HCT116 (cell line): ENCODE measurements at regions of chr15 and their contacts with region 1.

Region 1: DNA sequence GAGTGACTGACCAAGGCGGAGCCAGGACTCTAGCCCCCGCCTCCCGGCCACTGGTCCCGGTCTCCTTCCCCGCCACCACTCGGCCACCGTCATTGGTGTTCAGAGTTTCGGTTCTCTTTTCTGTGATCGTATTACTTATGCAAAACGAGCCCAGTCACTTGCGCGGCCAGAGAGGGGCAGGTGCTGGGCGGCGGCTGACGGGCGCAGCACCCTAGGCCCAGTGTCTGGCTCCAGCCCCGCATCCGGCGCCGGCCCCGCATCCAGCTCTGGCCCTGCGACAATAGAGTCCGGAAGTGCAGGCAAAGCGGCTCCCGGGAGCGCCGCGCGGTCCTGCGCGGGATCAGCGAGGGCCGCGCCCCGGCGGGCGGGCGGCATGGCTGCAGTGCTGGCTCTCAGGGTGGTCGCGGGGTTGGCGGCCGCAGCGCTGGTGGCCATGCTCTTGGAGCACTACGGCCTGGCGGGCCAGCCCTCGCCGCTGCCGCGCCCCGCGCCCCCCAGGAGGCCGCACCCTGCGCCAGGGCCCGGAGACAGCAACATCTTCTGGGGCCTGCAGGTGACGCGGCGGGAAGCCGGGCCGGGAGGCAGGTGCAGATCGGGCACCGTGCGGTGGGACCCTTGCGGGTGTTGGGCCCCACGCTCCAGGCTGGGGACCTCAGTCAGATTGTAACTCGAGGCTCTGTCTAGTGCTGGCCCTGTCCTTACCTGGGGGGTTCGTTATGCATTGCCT is at the start of gene TMEM62:
- DNase-seq: peak; percentile 76
- ATAC-seq: peak; percentile 91
- H3K4me3 ChIP-seq: peak within 1 kb of the TSS; percentile 66 to 67
- H3K27ac ChIP-seq: peak within 1 kb of the TSS; percentile 62
- H3K4me1 ChIP-seq: peaks cover 9 to 14% of the 10 kb centered on the region in 2 experiments; a peak in 3 of 4 replicates
- H3K27me3 ChIP-seq: no peaks in the 10 kb centered on the region
- CTCF ChIP-seq: no peak
- POLR2A ChIP-seq: peak; percentile 66
- RAD21 ChIP-seq: no peak
- total RNA-seq, gene TMEM62: 8.8 TPM

Region 2: DNA sequence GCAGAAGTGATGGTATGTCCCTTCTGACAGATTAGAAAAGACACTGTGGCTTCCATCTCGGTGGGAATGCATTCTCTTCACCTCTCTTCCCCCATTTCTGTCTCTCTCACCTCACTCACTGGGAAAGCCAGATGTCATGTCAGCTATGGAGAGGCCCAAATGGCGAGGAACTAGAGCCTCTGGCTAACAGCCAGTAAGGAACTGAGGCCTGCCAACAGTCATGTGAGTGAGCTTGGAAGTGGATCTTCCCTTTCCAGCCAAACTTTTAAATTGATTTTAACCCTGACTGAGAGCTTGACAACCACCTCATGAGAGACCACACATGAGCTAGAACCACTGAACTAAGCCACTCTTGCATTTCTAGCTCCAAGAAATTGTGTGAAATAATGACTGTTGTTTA is 361.4 kb before region 1 on chr15:
- CTCF ChIA-PET with region 1: no interaction called
- POLR2A ChIA-PET with region 1: no interaction called
- RAD21 ChIA-PET with region 1: no interaction called
- intact Hi-C with region 1: no loop called
- DNase-seq: no peak
- ATAC-seq: no peak
- H3K4me3 ChIP-seq: no peak overlapping the region
- H3K27ac ChIP-seq: no peak overlapping the region
- H3K4me1 ChIP-seq: no peaks in the 10 kb centered on the region
- H3K27me3 ChIP-seq: no peaks in the 10 kb centered on the region
- CTCF ChIP-seq: no peak
- POLR2A ChIP-seq: no peak
- RAD21 ChIP-seq: no peak

Region 3: GRCh38 chr15:43185157-43186017 is 51.8 kb after region 1 on chr15 and contains the start of gene CCNDBP1:
- CTCF ChIA-PET with region 1: no interaction called
- POLR2A ChIA-PET with region 1: no interaction called
- RAD21 ChIA-PET with region 1: no interaction called
- intact Hi-C with region 1: loop called (anchors 5 kb)
- DNase-seq: peak; percentile 84
- ATAC-seq: peak; percentile 98
- H3K4me3 ChIP-seq: peak within 1 kb of the TSS; percentile 75 to 82
- H3K27ac ChIP-seq: peak within 1 kb of the TSS; percentile 54
- H3K4me1 ChIP-seq: peaks cover 10 to 19% of the 10 kb centered on the region in 2 experiments
- H3K27me3 ChIP-seq: no peaks in the 10 kb centered on the region
- CTCF ChIP-seq: peak in 2 of 3 experiments; percentile 46 to 49; a peak in 4 of 6 replicates
- POLR2A ChIP-seq: peak; percentile 53
- RAD21 ChIP-seq: peak; percentile 7; the same call in 1 of the 2 replicates
- total RNA-seq, gene CCNDBP1: 39.8 TPM